Activated naive CD4-positive, alpha-beta T cell treated with anti-CD3 and anti-CD28 coated beads, Interleukin-2, amount 10 ng/mL, durations not matched to agents 7 days and 5 days (primary cell): ENCODE measurements at regions of chr15 and their contacts with region 1.

Region 1: DNA sequence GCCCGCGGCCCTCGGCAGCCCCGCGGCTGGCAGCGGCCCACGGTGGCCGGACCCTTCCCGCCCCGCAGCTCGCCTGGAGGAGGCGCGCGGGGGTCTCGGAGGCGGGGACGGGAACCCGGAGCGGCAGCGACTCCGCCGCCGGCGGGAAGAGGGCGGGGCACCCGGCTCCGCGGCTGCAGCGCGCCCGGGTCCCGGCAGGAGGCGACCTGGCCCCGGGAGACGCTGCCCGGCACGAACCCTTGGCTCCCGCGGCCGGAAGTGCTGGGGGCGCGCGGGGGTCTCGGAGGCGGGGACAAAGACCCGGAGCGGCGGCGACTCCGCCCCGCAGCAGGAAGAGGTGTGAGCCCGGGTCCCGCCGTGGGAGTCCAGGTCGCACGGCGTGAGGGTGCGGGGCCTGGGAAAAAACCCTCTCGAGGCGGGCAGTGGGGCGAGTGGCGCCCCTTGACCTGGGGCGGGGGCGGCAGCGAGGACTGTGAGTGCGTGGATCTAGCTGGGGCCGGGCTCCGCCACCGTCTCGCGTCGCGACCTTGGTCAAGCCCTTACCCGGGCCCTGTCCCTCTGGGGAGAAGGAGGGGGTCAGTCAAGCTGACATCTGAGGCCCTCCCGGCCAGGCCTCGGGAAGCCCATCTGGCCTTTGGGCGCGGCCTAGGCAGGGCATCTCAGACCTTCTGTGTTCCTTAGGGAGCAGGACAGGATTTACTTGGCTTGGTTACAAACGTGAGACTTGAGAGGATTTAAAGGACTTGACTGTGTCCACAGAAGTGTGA is at the start of gene CIB2:
- DNase-seq: peak; percentile 84
- H3K4me3 Mint-ChIP-seq: peak within 1 kb of the TSS; percentile 76
- H3K27ac Mint-ChIP-seq: peak within 1 kb of the TSS; percentile 34
- H3K4me1 Mint-ChIP-seq: peaks cover 24% of the 10 kb centered on the region
- H3K27me3 Mint-ChIP-seq: peaks cover 11% of the 10 kb centered on the region

Region 2: DNA sequence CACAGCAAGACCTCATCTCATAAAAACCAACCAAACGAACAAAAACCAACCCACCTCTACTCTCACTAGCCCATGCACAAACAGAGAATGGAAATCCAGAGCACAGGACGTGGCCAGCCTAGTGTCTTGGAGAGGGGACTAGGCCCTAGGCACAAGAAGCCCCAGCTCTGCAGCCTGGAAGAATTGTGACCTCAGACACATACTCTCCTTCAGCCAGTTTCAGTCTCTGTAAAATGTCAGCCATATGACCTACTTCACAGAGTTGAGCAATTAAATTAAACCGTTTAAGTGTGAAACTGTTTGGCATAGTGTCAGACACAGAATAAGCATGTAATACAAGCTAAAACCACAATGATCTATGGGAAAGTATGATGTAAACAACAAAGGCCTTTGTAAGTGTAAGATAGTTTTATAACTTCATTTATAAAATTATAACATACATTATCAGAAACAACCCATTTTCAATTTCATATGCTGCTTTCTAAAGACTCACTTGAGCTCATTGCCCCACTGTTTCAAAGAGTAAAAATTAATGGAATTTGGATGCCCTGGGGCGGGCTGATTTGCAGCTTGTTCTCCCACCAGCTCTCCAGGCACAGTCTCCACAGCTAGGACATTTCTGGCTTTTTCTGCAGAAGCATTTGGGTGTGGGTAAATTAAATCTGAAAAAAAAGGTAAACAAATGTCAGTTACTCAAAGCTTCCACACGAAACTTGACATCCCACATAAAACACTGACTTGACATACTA is 86.9 kb before region 1 on chr15:
- CTCF ChIA-PET with region 1: no interaction called
- DNase-seq: no peak
- H3K4me3 Mint-ChIP-seq: no peak overlapping the region
- H3K27ac Mint-ChIP-seq: peak overlapping the region; percentile 71
- H3K4me1 Mint-ChIP-seq: peaks cover 92% of the 10 kb centered on the region
- H3K27me3 Mint-ChIP-seq: no peaks in the 10 kb centered on the region

Region 3: GRCh38 chr15:78177447-78177873 is 46.0 kb after region 1 on chr15:
- CTCF ChIA-PET with region 1: interaction called, 18 read pairs
- DNase-seq: peak; percentile 57
- H3K4me3 Mint-ChIP-seq: no peak overlapping the region
- H3K27ac Mint-ChIP-seq: no peak overlapping the region
- H3K4me1 Mint-ChIP-seq: peaks cover 25% of the 10 kb centered on the region
- H3K27me3 Mint-ChIP-seq: peaks cover 18% of the 10 kb centered on the region

Region 4: GRCh38 chr15:78204351-78205309 is 73.2 kb after region 1 on chr15:
- CTCF ChIA-PET with region 1: interaction called, 10 read pairs
- DNase-seq: no peak
- H3K4me3 Mint-ChIP-seq: no peak overlapping the region
- H3K27ac Mint-ChIP-seq: no peak overlapping the region
- H3K4me1 Mint-ChIP-seq: no peaks in the 10 kb centered on the region
- H3K27me3 Mint-ChIP-seq: peaks cover 53% of the 10 kb centered on the region

Region 5: GRCh38 chr15:78241007-78241406 is 109.5 kb after region 1 on chr15:
- CTCF ChIA-PET with region 1: interaction called, 42 read pairs
- DNase-seq: peak; percentile 90
- H3K4me3 Mint-ChIP-seq: no peak overlapping the region
- H3K27ac Mint-ChIP-seq: no peak overlapping the region
- H3K4me1 Mint-ChIP-seq: peaks cover 3% of the 10 kb centered on the region
- H3K27me3 Mint-ChIP-seq: peaks cover 52% of the 10 kb centered on the region